Lower leg skin (tissue), 4 donors: ENCODE measurements at regions of chr2 and their contacts with region 1.

Region 1: GRCh38 chr2:200811336-200812121 is at the start of gene BZW1:
- DNase-seq: peak; percentile 95 to 99
- H3K4me3 ChIP-seq: peak within 1 kb of the TSS; percentile 86
- CTCF ChIP-seq: no peak
- POLR2A ChIP-seq: peak in 1 of 2 donors; percentile 56
- total RNA-seq, gene BZW1: 57.6 to 156 (median 148) TPM

Region 2: DNA sequence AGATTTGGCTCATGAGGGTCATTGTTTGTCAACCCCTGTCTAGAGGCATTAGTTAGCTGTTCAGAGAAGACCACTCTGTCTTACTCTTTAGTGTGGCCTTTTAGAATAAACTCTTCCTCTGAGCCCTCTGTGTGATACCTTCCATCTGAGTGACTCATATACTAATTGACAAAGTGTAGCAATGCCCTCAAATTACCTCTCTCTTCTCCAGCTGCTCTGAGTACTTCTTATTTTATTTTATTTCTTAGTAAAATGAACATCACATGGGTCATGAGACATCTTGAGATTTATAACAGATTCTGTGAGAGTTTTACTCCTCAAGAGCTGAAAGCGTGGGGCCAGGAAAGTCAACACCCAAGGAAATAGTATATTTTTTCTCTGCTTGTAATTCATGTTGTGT is 369.1 kb before region 1 on chr2:
- intact Hi-C with region 1: no loop called
- DNase-seq: no peak
- H3K4me3 ChIP-seq: no peak overlapping the region
- CTCF ChIP-seq: no peak
- POLR2A ChIP-seq: no peak

Region 3: DNA sequence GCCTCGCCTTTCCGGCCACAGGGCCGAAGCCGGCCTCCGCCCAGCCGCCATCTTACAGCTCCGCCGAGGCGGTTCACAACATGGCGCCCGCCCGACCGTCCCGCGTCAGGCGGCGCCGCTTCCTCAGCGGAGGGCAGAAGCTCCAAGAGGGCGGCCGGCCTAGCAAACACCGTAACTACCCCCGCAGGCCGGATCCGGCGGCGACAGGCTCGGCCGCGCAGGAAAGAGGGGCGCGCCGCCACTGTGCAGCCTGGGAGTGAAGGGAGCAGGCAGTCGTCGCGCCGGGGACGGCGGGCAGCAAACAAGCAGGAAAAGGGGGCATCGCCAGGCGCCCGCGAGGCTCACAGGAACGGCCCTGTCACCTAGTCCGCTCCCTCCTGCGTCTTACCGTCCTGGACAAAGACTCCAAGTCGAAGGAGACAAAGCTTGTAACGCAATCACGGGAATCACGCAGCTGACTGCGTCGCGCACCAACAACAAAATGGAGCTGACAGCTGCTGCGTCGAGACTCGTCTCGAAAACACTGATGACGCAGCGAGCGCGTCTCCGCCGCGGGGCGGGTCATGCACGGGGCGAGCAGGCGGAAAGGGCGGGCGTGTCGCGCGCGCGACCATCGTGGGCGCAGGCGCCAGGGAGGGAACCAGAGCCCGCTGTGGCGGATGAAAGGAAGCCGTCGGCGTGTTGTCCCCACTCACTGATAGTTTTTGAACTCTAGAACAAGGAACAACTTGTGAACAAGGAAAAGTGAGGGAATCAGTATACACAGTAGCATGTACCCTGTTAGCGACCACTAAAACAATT is 52.8 kb after region 1 on chr2 and contains the start of gene CLK1:
- intact Hi-C with region 1: loop called (anchors 10 kb)
- DNase-seq: peak; percentile 97 to 99
- H3K4me3 ChIP-seq: peak within 1 kb of the TSS; percentile 100
- CTCF ChIP-seq: peak in 1 of 3 donors; percentile 26
- POLR2A ChIP-seq: peak in 1 of 2 donors; percentile 98
- total RNA-seq, gene CLK1: 86.0 to 307 (median 205) TPM

Region 4: DNA sequence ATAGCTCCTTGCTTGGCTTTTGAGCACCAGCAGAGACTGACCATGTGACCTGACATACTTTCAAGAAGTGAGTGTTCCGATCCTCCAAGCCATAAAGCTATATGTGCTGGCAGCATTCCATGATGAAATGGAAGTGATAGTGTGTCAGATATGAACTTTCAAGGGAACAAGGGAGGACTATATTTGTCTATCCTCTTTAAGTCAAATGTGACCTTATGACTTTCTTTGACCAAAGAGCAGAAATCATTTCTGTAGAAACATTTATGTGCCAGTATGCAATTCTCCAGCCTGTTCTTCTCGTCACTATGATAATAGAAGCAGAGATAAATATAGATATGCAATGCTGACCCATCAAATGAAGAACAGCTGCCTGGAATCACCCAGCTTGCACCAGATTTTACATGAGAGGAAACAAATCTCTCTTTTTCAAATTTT is 245.6 kb after region 1 on chr2:
- intact Hi-C with region 1: no loop called
- DNase-seq: no peak
- H3K4me3 ChIP-seq: no peak overlapping the region
- CTCF ChIP-seq: no peak
- POLR2A ChIP-seq: no peak